ENCODE measurements at regions of chr4 and their contacts with region 1.

Region 1: DNA sequence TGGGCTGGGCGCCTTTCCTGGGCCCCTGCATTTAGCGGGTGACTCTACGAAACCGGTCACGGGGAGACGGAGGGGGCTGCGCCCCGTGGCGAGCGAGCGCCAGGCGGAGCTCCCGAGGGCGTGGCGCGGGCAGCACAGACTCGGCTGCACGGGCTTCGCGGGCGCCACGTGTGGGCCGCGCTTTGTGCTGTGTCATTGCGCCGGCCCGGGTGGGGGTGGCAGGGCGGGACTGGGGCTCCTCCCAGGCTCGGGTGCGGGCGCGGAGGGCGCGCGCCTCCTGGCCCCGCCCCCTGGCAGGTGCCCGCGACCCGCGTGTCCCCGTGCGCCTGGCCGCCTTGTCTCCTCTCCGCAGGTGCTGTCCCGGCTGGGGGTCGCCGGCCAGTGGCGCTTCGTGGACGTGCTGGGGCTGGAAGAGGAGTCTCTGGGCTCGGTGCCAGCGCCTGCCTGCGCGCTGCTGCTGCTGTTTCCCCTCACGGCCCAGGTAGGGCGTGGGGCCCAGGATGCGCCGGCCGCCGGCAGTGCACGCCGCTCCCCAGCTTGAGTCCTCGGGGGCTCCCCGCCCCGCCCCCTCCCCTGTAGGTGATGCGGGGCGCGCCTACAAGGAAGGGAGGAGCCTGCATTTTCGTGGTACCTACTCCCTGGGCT is 651 bp downstream of the UCHL1 start:
- DNase-seq: peak in 1 of 2 experiments; percentile 73
- H3K4me3 ChIP-seq: peak overlapping the region; percentile 87 to 97 (median 92)
- H3K27ac ChIP-seq: peak overlapping the region; percentile 89; the same call in 1 of the 2 replicates
- H3K4me1 ChIP-seq: peaks cover 2 to 8% (median 4%) of the 10 kb centered on the region in 4 experiments; a peak in 6 of 7 replicates
- H3K27me3 ChIP-seq: no peaks in the 10 kb centered on the region
- CTCF ChIP-seq: no peak
- EP300 ChIP-seq: no peak
- POLR2A ChIP-seq: peak; percentile 42 to 49; a peak in 1 of 3 replicates
- RAD21 ChIP-seq: no peak

Region 2: DNA sequence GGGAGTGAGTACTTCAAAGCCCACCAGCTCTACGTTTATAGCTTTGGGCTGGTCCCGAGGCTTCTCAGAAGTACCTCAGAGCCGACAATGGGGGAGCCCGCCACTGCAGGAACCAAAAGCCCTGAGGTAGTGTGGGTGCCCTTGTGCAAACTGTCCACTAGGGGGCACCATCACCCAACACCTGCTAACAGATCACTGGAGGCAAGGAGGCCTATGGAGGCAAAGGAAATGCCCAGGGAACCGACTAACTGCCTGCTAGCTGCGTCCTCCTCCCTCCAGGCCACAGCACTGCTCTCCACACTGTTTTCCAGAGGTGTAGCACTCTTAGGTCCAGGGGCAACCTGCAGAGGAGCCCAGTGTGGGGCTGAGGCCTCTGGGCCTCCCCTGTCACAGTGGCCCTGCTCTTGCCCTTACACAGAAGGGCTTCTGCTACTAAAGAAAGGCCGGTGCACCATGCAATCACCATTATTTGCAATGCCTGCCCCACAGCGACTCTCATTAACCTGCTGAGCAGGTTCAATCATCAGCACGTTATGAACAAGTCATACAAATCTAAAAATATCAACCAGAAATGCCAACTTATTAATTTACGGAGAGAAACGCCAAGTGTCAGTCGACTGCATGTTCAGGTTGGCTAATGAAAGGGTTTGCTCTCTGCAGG is 348.5 kb before region 1 on chr4:
- CTCF ChIA-PET with region 1: interaction called, 18 read pairs
- POLR2A ChIA-PET with region 1: interaction called, 10 read pairs
- DNase-seq: peak; percentile 69 to 88
- H3K4me3 ChIP-seq: no peak overlapping the region
- H3K27ac ChIP-seq: no peak overlapping the region
- H3K4me1 ChIP-seq: peaks cover 0 to 7% (median 4%) of the 10 kb centered on the region in 4 experiments; a peak in 5 of 7 replicates
- H3K27me3 ChIP-seq: no peaks in the 10 kb centered on the region
- CTCF ChIP-seq: peak; percentile 98 to 100 (median 99)
- EP300 ChIP-seq: no peak
- POLR2A ChIP-seq: no peak
- RAD21 ChIP-seq: peak; percentile 87 to 90

Region 3: DNA sequence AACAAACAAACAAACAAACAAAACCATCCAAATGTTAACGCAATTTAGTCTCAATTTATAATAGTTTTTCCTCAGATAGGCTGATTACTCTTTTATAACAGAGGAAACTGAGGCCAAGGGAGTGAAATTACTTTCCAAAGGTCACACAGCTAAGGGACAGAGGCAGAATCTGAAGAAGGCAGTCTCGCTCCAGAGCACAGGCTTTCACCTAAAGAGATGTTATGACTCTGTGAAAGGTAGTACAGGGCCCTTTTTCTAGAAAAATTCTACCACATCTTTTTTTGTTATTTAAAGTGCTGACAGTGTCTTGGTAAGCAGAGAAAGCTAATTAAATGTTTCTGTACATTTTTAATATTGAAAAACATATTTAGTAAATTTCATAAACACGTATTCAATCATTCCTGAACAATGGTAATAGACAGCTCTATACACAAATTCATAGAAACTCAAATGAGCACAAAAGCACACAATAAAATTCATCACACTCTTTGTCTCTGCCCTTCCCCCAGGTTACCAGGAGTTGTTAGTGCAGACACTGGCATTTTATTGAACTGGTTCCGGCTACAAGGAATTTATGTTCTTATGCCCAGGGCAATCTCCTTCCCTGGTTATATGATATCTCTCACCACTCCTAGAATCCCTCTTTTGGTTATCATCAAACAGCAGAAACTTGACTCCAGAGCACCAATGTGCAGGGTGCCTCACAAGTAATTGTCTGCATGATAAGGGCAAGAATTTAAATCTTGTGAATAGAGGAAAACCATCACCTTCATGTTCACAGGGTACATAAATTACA is 35.3 kb before region 1 on chr4:
- CTCF ChIA-PET with region 1: interaction called, 4 read pairs
- POLR2A ChIA-PET with region 1: interaction called, 86 read pairs
- DNase-seq: peak in 1 of 2 experiments; percentile 2
- H3K4me3 ChIP-seq: no peak overlapping the region
- H3K27ac ChIP-seq: no peak overlapping the region
- H3K4me1 ChIP-seq: peaks cover 0 to 3% (median 1%) of the 10 kb centered on the region in 4 experiments; a peak in 4 of 7 replicates
- H3K27me3 ChIP-seq: no peaks in the 10 kb centered on the region
- CTCF ChIP-seq: no peak
- EP300 ChIP-seq: no peak
- POLR2A ChIP-seq: no peak
- RAD21 ChIP-seq: no peak

Region 4: GRCh38 chr4:41241919-41242318 is 15.5 kb before region 1 on chr4:
- CTCF ChIA-PET with region 1: interaction called, 8 read pairs
- POLR2A ChIA-PET with region 1: interaction called, 109 read pairs
- DNase-seq: no peak
- H3K4me3 ChIP-seq: no peak overlapping the region
- H3K27ac ChIP-seq: no peak overlapping the region
- H3K4me1 ChIP-seq: no peaks in the 10 kb centered on the region
- H3K27me3 ChIP-seq: peaks cover 0 to 1% (median 0%) of the 10 kb centered on the region in 4 experiments; a peak in 1 of 7 replicates
- CTCF ChIP-seq: no peak
- EP300 ChIP-seq: no peak
- POLR2A ChIP-seq: no peak
- RAD21 ChIP-seq: no peak

Region 5: GRCh38 chr4:41281038-41281634 is 23.8 kb after region 1 on chr4:
- CTCF ChIA-PET with region 1: interaction called, 9 read pairs
- POLR2A ChIA-PET with region 1: interaction called, 27 read pairs
- DNase-seq: no peak
- H3K4me3 ChIP-seq: no peak overlapping the region
- H3K27ac ChIP-seq: no peak overlapping the region
- H3K4me1 ChIP-seq: no peaks in the 10 kb centered on the region
- H3K27me3 ChIP-seq: no peaks in the 10 kb centered on the region
- CTCF ChIP-seq: peak in 2 of 3 experiments; percentile 84 to 91; a peak in 3 of 4 replicates
- EP300 ChIP-seq: no peak
- POLR2A ChIP-seq: no peak
- RAD21 ChIP-seq: peak; percentile 100

Region 6: DNA sequence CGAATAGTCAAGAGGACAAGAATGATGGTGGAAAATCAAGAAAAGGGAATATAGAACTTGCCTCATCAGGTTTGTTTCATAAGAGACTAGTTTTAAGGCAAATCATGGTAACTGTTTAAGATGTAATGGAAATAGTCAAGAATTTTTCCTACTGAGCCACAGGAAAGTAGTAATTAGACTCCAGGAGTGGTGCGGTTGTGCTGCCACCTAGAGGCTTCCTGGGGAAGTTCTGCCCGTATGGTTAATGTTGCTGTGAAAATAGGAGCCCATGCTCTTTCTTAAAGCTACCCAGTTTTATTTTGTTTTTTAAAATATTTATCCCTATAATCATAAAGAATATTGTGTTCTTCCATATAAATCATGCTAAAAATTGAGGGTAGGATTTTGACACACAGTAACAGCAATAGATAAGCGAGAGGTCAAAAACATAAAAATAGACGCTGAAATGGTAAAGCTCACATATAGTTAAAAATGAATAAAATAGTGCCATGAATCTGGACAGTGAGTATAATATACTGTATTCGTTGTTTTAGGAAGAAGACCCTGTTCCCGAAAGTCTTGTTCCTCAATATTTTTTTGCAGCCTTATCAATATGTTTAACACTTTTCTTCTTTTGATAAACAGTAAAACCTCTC is 404.2 kb after region 1 on chr4:
- CTCF ChIA-PET with region 1: interaction called, 11 read pairs
- POLR2A ChIA-PET with region 1: interaction called, 7 read pairs
- DNase-seq: peak in 1 of 2 experiments; percentile 78
- H3K4me3 ChIP-seq: no peak overlapping the region
- H3K27ac ChIP-seq: no peak overlapping the region
- H3K4me1 ChIP-seq: no peaks in the 10 kb centered on the region
- H3K27me3 ChIP-seq: no peaks in the 10 kb centered on the region
- CTCF ChIP-seq: peak; percentile 74 to 85 (median 80)
- EP300 ChIP-seq: no peak
- POLR2A ChIP-seq: no peak
- RAD21 ChIP-seq: peak; percentile 91 to 92

Region 7: DNA sequence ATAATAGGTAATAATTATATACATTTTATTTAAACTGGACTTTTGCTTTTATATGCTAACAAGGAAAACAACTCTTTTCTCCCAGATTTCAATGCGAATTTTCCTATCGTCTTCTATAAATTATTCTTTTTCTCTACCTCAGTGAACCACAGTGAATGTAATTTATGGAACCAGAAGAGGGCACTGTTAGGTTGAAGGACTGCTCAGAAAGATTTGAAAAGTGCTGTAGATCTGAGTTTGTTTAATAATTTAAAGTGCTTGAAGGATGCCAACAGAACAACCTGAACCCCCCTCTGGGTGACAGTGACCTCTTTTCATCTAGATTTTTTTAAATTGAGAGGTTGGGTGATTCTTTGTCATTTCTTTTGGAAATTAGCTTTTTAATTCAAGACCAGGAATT is 436.2 kb after region 1 on chr4:
- CTCF ChIA-PET with region 1: no interaction called
- POLR2A ChIA-PET with region 1: no interaction called
- DNase-seq: no peak
- H3K4me3 ChIP-seq: no peak overlapping the region
- H3K27ac ChIP-seq: no peak overlapping the region
- H3K4me1 ChIP-seq: no peaks in the 10 kb centered on the region
- H3K27me3 ChIP-seq: no peaks in the 10 kb centered on the region
- CTCF ChIP-seq: peak in 2 of 3 experiments; percentile 35 to 45; a peak in 2 of 4 replicates
- EP300 ChIP-seq: no peak
- POLR2A ChIP-seq: no peak
- RAD21 ChIP-seq: peak; percentile 64 to 65